ENCODE measurements at regions of chr10 and their contacts with region 1.

Region 1: GRCh38 chr10:12068449-12069269 is at the start of gene DHTKD1:
- DNase-seq: peak; percentile 96 to 98
- ATAC-seq: peak; percentile 96 to 97
- H3K4me3 ChIP-seq: peak within 1 kb of the TSS; percentile 90 to 100 (median 98)
- H3K27ac ChIP-seq: peak within 1 kb of the TSS; percentile 89 to 95 (median 92)
- H3K4me1 ChIP-seq: peaks cover 3 to 8% of the 10 kb centered on the region in 2 donors
- H3K27me3 ChIP-seq: no peaks in the 10 kb centered on the region
- CTCF ChIP-seq: peak; percentile 54 to 72 (median 62)
- POLR2A ChIP-seq: peak; percentile 61 to 71
- total RNA-seq, gene DHTKD1: 15.2 to 45.7 (median 25.4) TPM

Region 2: GRCh38 chr10:11678074-11678793 is 390.4 kb before region 1 on chr10:
- in situ Hi-C with region 1: no loop called
- intact Hi-C with region 1: no loop called
- DNase-seq: no peak
- ATAC-seq: no peak
- H3K4me3 ChIP-seq: no peak overlapping the region
- H3K27ac ChIP-seq: no peak overlapping the region
- H3K4me1 ChIP-seq: no peaks in the 10 kb centered on the region
- H3K27me3 ChIP-seq: peaks cover 0 to 10% (median 3%) of the 10 kb centered on the region in 3 donors
- CTCF ChIP-seq: no peak
- POLR2A ChIP-seq: no peak

Region 3: DNA sequence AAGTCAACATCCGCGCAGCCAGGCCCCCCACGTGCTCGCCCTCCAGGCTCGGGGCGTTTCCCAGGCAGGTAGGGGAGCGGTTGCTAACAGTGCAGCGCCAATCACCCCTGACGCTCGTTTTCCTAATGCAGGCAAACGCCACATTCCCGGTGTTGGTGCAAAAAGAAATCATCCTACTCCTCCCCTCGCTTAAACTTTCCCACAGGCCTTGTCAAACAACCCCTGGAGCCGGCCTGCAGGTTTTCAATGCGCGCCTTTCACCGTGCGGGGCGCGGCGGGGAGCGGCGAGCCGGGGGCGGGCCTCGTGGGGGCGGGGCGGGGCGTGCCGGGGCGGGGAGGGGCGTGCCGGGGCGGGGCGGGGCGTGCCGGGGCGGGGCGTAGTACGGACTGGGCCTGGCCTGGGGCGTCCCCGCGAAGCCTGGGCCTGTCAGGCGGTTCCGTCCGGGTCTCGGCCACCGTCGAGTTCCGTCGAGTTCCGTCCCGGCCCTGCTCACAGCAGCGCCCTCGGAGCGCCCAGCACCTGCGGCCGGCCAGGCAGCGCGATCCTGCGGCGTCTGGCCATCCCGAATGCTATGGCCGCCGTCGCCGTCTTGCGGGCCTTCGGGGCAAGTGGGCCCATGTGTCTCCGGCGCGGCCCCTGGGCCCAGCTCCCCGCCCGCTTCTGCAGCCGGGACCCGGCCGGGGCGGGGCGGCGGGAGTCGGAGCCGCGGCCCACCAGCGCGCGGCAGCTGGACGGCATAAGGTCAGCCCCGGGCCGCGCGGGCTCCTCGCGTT is 326.5 kb before region 1 on chr10 and contains the start of gene ECHDC3:
- in situ Hi-C with region 1: no loop called
- intact Hi-C with region 1: loop called (anchors 10 kb)
- DNase-seq: peak; percentile 71 to 72
- ATAC-seq: peak; percentile 61 to 65
- H3K4me3 ChIP-seq: peak within 1 kb of the TSS; percentile 72 to 86 (median 78)
- H3K27ac ChIP-seq: peak within 1 kb of the TSS; percentile 93 to 96 (median 94)
- H3K4me1 ChIP-seq: peaks cover 28 to 34% of the 10 kb centered on the region in 2 donors
- H3K27me3 ChIP-seq: no peaks in the 10 kb centered on the region
- CTCF ChIP-seq: no peak
- POLR2A ChIP-seq: peak; percentile 83 to 86
- total RNA-seq, gene ECHDC3: 465 to 605 (median 490) TPM

Region 4: DNA sequence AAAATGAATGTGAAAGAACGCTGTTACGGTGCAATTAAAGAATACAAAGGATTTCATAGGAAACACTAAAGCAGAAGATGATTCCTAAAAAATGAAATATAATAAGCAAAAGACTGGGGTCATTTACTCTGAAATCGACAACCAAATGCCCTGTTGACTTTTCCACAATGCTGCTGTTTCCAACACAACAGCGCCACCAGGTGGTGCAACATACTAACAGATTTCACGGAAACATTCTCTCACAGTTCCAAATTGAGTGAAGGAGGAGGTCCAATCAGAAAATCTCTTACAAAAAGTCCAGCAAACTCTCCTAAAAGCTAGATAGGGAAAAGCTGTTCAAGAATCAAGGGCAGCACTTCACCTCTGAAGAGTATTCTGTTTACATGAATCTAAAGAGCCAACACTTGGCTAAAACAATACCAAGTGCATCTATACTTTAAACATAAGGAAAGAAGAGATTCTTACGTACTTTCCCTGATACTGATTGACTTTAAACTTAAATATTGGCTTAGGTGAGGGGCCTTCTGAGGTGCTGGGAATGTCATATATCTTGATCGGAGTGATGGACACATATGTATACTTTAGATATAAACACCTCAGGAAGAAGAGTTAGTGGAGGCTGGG is 82.0 kb before region 1 on chr10:
- in situ Hi-C with region 1: no loop called
- intact Hi-C with region 1: loop called (anchors 5 kb)
- DNase-seq: peak; percentile 10 to 41
- ATAC-seq: peak in 1 of 2 donors; percentile 53
- H3K4me3 ChIP-seq: no peak overlapping the region
- H3K27ac ChIP-seq: no peak overlapping the region
- H3K4me1 ChIP-seq: peaks cover 0 to 3% of the 10 kb centered on the region in 2 donors
- H3K27me3 ChIP-seq: no peaks in the 10 kb centered on the region
- CTCF ChIP-seq: peak; percentile 50 to 82 (median 53)
- POLR2A ChIP-seq: no peak

Region 5: DNA sequence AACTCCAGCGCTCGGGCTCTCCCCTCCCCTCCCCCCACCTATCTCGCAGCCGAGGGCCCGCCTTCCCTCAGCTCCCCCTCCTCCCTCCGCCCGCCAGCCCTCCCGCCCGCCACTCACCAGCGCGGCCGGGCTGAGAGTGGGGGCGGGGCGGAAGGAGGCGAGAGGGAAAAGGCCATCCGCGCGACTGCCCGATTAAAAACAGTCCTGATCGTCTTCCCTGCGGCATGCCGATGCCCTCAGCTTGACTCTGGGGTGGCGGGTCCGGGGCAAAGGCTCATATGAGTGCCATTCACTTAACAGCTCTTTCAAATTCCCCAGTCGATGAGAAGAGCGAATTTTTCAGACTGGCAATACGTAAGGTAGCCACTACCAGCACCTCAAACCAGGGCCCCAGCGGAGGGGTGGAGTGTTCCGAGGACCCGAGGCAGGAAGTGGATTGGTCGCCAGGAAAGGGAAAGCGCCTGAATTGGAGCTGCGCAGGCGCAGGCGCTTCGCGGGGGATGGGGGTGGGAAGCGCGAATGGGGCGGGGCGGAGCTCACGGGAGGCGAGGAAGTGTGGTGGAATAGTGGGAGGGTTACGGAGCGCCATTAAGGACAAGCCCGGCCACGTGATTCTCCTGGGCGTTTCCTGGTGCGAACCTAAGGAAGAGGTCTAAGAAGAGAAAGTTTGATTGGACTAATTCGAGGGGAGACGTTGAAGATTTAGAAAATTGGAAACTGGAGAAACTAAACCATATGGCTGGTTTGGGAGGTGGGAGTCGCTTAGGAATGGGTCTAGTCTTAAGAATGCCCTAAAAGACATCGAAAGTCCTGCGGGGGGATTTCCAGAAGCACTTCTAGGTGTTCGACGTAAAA is 25.6 kb before region 1 on chr10 and contains the start of gene UPF2:
- in situ Hi-C with region 1: no loop called
- intact Hi-C with region 1: loop called (anchors 1 kb)
- DNase-seq: peak; percentile 98 to 99
- ATAC-seq: peak; percentile 98 to 99
- H3K4me3 ChIP-seq: peak within 1 kb of the TSS; percentile 91 to 99 (median 96)
- H3K27ac ChIP-seq: peak within 1 kb of the TSS; percentile 94 to 96 (median 95)
- H3K4me1 ChIP-seq: peaks cover 14 to 16% of the 10 kb centered on the region in 2 donors
- H3K27me3 ChIP-seq: no peaks in the 10 kb centered on the region
- CTCF ChIP-seq: no peak
- POLR2A ChIP-seq: peak in 1 of 2 donors; percentile 51
- total RNA-seq, gene UPF2: 22.9 to 30.7 (median 26.4) TPM

Region 6: DNA sequence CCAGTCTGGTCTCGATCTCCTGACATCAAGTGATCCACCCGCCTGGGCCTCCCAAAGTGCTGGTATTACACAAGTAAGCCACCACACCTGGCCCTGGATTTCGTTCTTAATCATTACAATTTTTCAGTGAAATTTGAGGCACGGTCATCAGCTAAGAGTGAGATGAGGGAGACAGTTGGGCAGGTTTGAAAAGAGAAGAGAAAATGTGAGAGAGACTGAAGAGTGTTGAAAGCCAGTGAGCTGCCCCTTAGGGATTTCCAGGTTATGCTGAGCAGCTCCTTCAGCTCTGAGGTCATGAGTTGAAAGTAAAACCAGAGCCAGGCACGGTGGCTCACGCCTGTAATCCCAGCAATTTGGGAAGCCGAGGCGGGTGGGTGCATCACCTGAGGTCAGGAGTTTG is 20.1 kb before region 1 on chr10:
- in situ Hi-C with region 1: no loop called
- intact Hi-C with region 1: loop called (anchors 1 kb)
- DNase-seq: no peak
- ATAC-seq: no peak
- H3K4me3 ChIP-seq: no peak overlapping the region
- H3K27ac ChIP-seq: no peak overlapping the region
- H3K4me1 ChIP-seq: no peaks in the 10 kb centered on the region
- H3K27me3 ChIP-seq: no peaks in the 10 kb centered on the region
- CTCF ChIP-seq: no peak
- POLR2A ChIP-seq: no peak

Region 7: DNA sequence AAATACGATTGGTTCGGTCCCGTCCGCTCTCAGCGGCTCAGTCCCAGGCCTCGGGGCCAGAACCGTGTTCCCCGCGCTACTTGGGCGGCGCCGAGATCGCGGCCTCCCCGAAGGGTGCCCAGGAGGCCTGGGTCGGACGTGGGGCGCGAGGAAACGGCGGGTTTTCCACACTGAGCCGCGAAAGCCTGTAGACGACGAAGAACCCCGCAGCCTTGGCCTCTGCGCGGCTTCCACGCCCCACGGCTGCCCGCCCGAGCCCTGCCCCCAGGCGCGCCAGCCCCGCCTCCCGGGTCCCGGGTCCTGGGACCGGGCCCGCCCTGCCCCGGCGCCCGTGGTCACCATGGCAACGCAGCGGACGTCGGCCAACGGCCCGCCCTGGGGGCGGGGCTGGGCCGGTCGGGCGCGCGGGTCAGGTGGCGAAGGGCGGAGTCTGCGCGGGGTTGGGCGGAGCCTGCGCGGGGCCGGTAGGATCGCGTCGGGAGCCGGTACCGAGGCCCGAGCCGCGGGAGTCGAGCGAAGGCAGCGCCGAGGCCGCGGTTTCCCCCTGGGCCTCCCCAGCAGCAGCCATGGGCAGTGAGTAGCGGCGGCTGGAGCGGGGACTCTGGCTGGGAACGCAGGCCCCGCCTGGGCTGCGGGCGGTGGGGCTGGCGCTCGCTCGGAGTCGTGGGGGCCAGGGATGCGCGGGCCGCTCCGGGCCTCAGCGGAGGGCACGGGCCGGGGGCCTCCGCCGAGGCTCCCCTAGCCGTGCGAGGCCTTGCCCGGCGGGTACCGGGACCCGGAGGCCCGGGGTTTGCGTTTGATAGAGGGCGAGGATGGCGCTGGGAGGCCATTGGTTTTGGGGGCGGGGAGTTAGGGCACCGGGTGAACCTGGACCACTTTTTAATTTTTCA is 60.8 kb after region 1 on chr10 and contains the start of gene SEC61A2:
- in situ Hi-C with region 1: no loop called
- intact Hi-C with region 1: loop called (anchors 2 kb)
- DNase-seq: peak; percentile 88
- ATAC-seq: peak; percentile 93 to 96
- H3K4me3 ChIP-seq: peak within 1 kb of the TSS; percentile 68 to 96 (median 82)
- H3K27ac ChIP-seq: peak within 1 kb of the TSS; percentile 74 to 89 (median 84)
- H3K4me1 ChIP-seq: peaks cover 9 to 10% of the 10 kb centered on the region in 2 donors
- H3K27me3 ChIP-seq: no peaks in the 10 kb centered on the region
- CTCF ChIP-seq: no peak
- POLR2A ChIP-seq: peak; percentile 47 to 55
- total RNA-seq, gene SEC61A2: 6.0 to 9.4 (median 8.6) TPM

Region 8: DNA sequence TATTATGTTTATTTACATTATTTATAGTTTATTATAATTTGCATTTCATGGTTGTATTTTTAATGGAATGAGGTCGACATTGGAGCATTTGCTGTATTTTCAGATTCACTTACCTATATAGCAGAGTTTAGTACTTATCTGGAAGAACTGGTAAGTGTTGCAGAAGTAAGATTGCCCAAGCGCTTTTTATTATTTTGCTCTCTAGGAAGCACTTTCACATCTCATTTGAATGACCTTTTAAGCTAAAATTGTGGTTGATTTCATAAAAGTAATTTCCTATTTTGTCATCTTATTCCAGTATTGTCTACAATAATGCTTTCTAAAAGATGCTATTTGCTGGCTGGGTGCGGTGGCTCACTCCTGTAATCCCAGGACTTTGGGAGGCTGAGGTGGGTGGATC is 89.5 kb after region 1 on chr10:
- in situ Hi-C with region 1: no loop called
- intact Hi-C with region 1: no loop called
- DNase-seq: no peak
- ATAC-seq: no peak
- H3K4me3 ChIP-seq: no peak overlapping the region
- H3K27ac ChIP-seq: no peak overlapping the region
- H3K4me1 ChIP-seq: no peaks in the 10 kb centered on the region
- H3K27me3 ChIP-seq: no peaks in the 10 kb centered on the region
- CTCF ChIP-seq: no peak
- POLR2A ChIP-seq: no peak